CD14-positive monocyte (primary cell): ENCODE measurements at regions of chr2 and their contacts with region 1.

Region 1: DNA sequence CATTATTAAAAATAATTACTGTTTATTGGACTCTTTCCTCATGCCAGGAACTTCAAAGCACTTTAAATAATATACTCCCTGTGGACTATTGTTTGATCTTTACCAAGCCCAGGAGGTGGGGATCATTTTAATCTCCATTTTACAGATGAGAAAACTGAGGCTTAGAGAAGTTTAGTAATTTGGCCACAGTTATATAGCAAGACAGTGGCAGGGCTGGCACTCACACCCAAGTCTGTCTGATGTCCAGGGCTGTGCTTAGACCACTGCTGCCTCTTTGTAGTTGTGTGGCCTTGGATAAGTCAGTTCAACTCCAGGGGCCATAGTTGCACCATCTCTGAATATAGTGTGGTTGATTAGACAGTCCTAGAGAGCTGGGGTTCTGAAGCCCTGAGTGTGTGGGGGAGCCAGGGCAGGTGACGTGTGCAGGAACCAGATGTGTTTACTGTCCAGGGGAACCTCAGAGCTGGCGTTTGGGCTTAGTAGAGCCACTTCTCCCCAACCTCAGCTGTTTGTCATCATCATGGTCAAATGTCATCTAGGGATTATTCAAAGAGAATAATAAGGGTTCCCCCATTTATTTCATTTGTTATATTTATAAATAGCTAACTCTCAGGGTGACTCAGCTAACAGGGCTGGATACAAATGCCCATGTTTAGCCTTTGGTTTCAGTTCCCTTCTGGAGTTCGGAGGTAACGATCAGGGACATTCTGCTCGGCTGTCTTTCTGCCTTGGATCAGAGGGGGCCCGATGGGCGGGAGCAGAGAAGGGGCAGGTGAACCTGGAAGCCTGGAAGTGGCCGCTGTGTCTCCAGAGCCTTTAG is 68.0 kb downstream of the BOLA3 start:
- DNase-seq: peak; percentile 58 to 81 (median 74)
- H3K4me3 ChIP-seq: peak overlapping the region in 2 of 3 experiments; percentile 24 to 66
- H3K4me3 Mint-ChIP-seq: peak overlapping the region; percentile 75 to 84
- H3K27ac ChIP-seq: peak overlapping the region; percentile 75 to 79
- H3K27ac Mint-ChIP-seq: peak overlapping the region; percentile 87 to 96 (median 95)
- H3K4me1 ChIP-seq: peaks cover 24 to 25% of the 10 kb centered on the region in 2 donors
- H3K4me1 Mint-ChIP-seq: peaks cover 42% of the 10 kb centered on the region
- H3K27me3 ChIP-seq: no peaks in the 10 kb centered on the region
- H3K27me3 Mint-ChIP-seq: no peaks in the 10 kb centered on the region
- CTCF ChIP-seq: no peak

Region 2: GRCh38 chr2:74002487-74003391 is 77.0 kb before region 1 on chr2:
- intact Hi-C with region 1: loop called in 1 of 2 experiments (anchors 10 kb)
- DNase-seq: peak; percentile 36 to 56 (median 43)
- H3K4me3 ChIP-seq: peak overlapping the region in 2 of 3 experiments; percentile 25 to 60
- H3K4me3 Mint-ChIP-seq: peak overlapping the region; percentile 78
- H3K27ac ChIP-seq: no peak overlapping the region
- H3K27ac Mint-ChIP-seq: peak overlapping the region in 2 of 7 donors; percentile 76 to 82
- H3K4me1 ChIP-seq: peaks cover 26 to 40% of the 10 kb centered on the region in 2 donors
- H3K4me1 Mint-ChIP-seq: peaks cover 75% of the 10 kb centered on the region
- H3K27me3 ChIP-seq: no peaks in the 10 kb centered on the region
- H3K27me3 Mint-ChIP-seq: peaks cover 1 to 3% (median 1%) of the 10 kb centered on the region in 3 donors
- CTCF ChIP-seq: no peak

Region 3: DNA sequence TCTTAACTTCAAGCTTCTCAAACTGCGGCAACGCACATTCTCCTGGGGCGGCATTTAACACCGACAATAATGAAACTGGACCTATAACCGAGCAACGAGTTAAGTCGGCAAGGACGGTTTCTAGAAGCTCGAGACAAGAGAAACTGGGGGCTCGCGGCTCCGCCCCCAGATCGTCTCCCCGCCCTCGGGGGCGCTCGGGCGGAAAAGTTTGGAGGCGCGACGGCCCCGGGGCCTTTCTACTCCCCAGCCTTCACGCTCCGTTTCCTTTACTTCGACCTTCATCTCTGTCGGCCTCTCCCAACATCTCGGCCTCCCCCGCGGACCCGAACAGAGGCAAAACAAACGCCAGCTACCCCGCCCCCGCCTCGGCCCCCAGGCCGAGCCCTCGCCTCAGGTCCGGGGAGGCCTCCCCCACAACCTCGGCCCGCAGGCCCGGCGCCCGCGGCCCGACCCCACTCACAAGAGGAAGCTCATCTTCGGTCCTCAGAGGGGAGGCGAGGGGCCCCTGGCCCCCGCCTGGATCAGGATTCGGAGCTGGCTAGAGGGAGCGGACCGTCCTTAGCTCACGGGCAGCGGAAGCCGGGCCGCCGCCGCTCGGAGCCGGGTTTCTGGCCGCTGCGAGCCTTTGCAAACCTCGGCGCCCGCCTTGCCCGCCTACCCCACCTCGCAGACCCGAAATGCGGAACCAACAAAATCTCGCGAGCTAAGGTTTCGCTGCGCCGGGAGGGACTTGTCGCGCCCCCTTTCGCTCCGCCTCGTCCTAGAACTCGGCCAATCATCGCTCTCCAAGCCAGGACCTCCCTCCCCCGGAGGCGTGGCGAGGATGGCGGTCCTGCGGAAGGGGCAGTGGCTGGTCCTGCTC is 98.7 kb after region 1 on chr2 and contains the start of gene MOB1A:
- intact Hi-C with region 1: no loop called
- DNase-seq: peak; percentile 98 to 99 (median 99)
- H3K4me3 ChIP-seq: peak within 1 kb of the TSS; percentile 68 to 96 (median 84)
- H3K4me3 Mint-ChIP-seq: peak within 1 kb of the TSS; percentile 85 to 91
- H3K27ac ChIP-seq: peak within 1 kb of the TSS; percentile 90 to 94
- H3K27ac Mint-ChIP-seq: peak within 1 kb of the TSS; percentile 89 to 97 (median 95)
- H3K4me1 ChIP-seq: peaks cover 59 to 81% of the 10 kb centered on the region in 2 donors
- H3K4me1 Mint-ChIP-seq: peaks cover 56% of the 10 kb centered on the region
- H3K27me3 ChIP-seq: no peaks in the 10 kb centered on the region
- H3K27me3 Mint-ChIP-seq: no peaks in the 10 kb centered on the region
- CTCF ChIP-seq: no peak
- polyA plus RNA-seq, gene MOB1A: 55.0 to 367 (median 285) TPM

Region 4: GRCh38 chr2:74198461-74199274 is 118.9 kb after region 1 on chr2 and contains the start of gene MTHFD2:
- intact Hi-C with region 1: no loop called
- DNase-seq: peak; percentile 96 to 98 (median 96)
- H3K4me3 ChIP-seq: peak within 1 kb of the TSS; percentile 58 to 78 (median 71)
- H3K4me3 Mint-ChIP-seq: peak within 1 kb of the TSS; percentile 92 to 100
- H3K27ac ChIP-seq: peak within 1 kb of the TSS; percentile 86 to 94
- H3K27ac Mint-ChIP-seq: peak within 1 kb of the TSS; percentile 96 to 98 (median 97)
- H3K4me1 ChIP-seq: peaks cover 25 to 38% of the 10 kb centered on the region in 2 donors
- H3K4me1 Mint-ChIP-seq: peaks cover 36% of the 10 kb centered on the region
- H3K27me3 ChIP-seq: no peaks in the 10 kb centered on the region
- H3K27me3 Mint-ChIP-seq: peaks cover 0 to 5% (median 1%) of the 10 kb centered on the region in 3 donors
- CTCF ChIP-seq: peak; percentile 92
- polyA plus RNA-seq, gene MTHFD2: 24.1 to 39.4 (median 38.5) TPM